A673 (cell line): ENCODE measurements at regions of chr5 and their contacts with region 1.

Region 1: DNA sequence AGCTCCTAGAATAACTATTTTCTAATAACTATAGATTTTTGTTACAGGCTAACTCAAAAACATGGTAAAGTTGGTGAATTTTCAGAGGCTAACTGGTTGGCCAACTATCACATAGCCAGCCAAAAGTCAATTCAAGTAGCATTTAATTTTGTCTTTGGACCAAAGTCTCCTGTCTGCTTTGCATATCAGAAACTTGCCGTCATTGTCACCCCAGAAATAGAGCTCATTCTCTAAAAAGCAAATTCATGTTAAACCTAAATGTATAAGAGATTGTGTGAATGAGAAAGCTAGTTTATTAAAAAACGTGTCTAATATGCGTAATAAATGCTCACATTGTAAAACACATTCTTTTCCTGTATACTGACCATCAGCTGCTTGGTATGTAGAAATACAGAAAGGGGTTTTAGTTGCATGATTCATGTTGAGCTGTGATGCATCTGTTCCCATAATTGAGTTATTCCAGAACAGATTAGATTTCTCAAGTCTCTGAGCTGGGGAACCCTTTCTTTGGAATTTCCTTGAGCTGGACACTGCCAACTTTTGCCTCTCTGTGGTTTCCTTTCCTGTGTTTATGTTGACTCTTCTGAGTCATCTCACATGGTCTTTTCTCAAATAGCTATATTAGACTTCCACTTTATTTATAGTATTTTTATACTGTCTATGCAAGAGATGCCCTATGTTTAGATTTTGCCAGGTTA is 7.3 kb downstream of the SRFBP1 start:
- DNase-seq: peak; percentile 69
- H3K4me3 ChIP-seq: no peak overlapping the region
- H3K27ac ChIP-seq: peak overlapping the region; percentile 37
- H3K4me1 ChIP-seq: peaks cover 36% of the 10 kb centered on the region
- H3K27me3 ChIP-seq: no peaks in the 10 kb centered on the region
- CTCF ChIP-seq: no peak

Region 2: DNA sequence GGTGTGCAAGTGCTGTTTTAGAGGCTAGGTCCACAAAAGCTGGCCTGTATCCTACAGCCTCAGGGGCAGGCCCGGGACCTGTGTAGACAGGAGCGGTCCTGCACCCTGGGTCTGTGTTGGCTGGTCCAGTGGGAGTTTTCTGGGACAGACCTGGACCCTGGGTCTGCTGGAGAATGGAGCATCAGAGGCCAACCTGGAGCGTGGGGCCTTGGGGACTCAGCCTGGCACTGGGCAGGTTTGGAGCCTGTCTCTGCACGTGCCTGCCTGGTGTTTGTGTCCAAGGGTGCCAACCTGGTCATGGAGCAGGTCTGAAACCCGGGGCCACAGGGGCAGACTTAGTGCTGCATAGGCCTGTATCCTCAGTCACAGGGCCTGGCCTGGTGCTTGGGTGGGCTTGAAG is 38.5 kb after region 1 on chr5:
- CTCF ChIA-PET with region 1: no interaction called
- POLR2A ChIA-PET with region 1: no interaction called
- intact Hi-C with region 1: no loop called
- DNase-seq: no peak
- H3K4me3 ChIP-seq: no peak overlapping the region
- H3K27ac ChIP-seq: no peak overlapping the region
- H3K4me1 ChIP-seq: no peaks in the 10 kb centered on the region
- H3K27me3 ChIP-seq: no peaks in the 10 kb centered on the region
- CTCF ChIP-seq: no peak

Region 3: GRCh38 chr5:122076664-122077365 is 107.8 kb after region 1 on chr5:
- CTCF ChIA-PET with region 1: interaction called, 3 read pairs
- POLR2A ChIA-PET with region 1: no interaction called
- intact Hi-C with region 1: loop called (anchors 2 kb)
- DNase-seq: peak; percentile 78
- H3K4me3 ChIP-seq: peak overlapping the region; percentile 60
- H3K27ac ChIP-seq: no peak overlapping the region
- H3K4me1 ChIP-seq: peaks cover 6% of the 10 kb centered on the region
- H3K27me3 ChIP-seq: peaks cover 3% of the 10 kb centered on the region
- CTCF ChIP-seq: peak; percentile 95

Region 4: GRCh38 chr5:122101636-122102285 is 132.7 kb after region 1 on chr5:
- CTCF ChIA-PET with region 1: interaction called, 3 read pairs
- POLR2A ChIA-PET with region 1: no interaction called
- intact Hi-C with region 1: loop called (anchors 1 kb)
- DNase-seq: peak; percentile 80
- H3K4me3 ChIP-seq: no peak overlapping the region
- H3K27ac ChIP-seq: no peak overlapping the region
- H3K4me1 ChIP-seq: peaks cover 8% of the 10 kb centered on the region
- H3K27me3 ChIP-seq: no peaks in the 10 kb centered on the region
- CTCF ChIP-seq: peak; percentile 68

Region 5: GRCh38 chr5:122156724-122157325 is 187.8 kb after region 1 on chr5:
- CTCF ChIA-PET with region 1: interaction called, 4 read pairs
- POLR2A ChIA-PET with region 1: interaction called, 4 read pairs
- intact Hi-C with region 1: loop called (anchors 5 kb)
- DNase-seq: peak; percentile 52
- H3K4me3 ChIP-seq: no peak overlapping the region
- H3K27ac ChIP-seq: no peak overlapping the region
- H3K4me1 ChIP-seq: no peaks in the 10 kb centered on the region
- H3K27me3 ChIP-seq: no peaks in the 10 kb centered on the region
- CTCF ChIP-seq: peak; percentile 52

Region 6: GRCh38 chr5:122408592-122409224 is 439.6 kb after region 1 on chr5:
- CTCF ChIA-PET with region 1: no interaction called
- POLR2A ChIA-PET with region 1: no interaction called
- intact Hi-C with region 1: loop called (anchors 10 kb)
- DNase-seq: peak; percentile 80
- H3K4me3 ChIP-seq: no peak overlapping the region
- H3K27ac ChIP-seq: no peak overlapping the region
- H3K4me1 ChIP-seq: peaks cover 9% of the 10 kb centered on the region
- H3K27me3 ChIP-seq: no peaks in the 10 kb centered on the region
- CTCF ChIP-seq: no peak